PC-9 (cell line): ENCODE measurements at regions of chr2 and their contacts with region 1.

Region 1: GRCh38 chr2:121519732-121520640 is 10.7 kb upstream of the RNU4ATAC start:
- DNase-seq: no peak
- H3K4me3 ChIP-seq: no peak overlapping the region
- H3K27ac ChIP-seq: no peak overlapping the region
- H3K4me1 ChIP-seq: no peaks in the 10 kb centered on the region
- H3K27me3 ChIP-seq: no peaks in the 10 kb centered on the region
- CTCF ChIP-seq: no peak

Region 2: GRCh38 chr2:120415060-120415459 is 1104.9 kb before region 1 on chr2:
- CTCF ChIA-PET with region 1: interaction called, 12 read pairs
- POLR2A ChIA-PET with region 1: no interaction called
- intact Hi-C with region 1: no loop called
- DNase-seq: no peak
- H3K4me3 ChIP-seq: no peak overlapping the region
- H3K27ac ChIP-seq: no peak overlapping the region
- H3K4me1 ChIP-seq: no peaks in the 10 kb centered on the region
- H3K27me3 ChIP-seq: no peaks in the 10 kb centered on the region
- CTCF ChIP-seq: no peak

Region 3: DNA sequence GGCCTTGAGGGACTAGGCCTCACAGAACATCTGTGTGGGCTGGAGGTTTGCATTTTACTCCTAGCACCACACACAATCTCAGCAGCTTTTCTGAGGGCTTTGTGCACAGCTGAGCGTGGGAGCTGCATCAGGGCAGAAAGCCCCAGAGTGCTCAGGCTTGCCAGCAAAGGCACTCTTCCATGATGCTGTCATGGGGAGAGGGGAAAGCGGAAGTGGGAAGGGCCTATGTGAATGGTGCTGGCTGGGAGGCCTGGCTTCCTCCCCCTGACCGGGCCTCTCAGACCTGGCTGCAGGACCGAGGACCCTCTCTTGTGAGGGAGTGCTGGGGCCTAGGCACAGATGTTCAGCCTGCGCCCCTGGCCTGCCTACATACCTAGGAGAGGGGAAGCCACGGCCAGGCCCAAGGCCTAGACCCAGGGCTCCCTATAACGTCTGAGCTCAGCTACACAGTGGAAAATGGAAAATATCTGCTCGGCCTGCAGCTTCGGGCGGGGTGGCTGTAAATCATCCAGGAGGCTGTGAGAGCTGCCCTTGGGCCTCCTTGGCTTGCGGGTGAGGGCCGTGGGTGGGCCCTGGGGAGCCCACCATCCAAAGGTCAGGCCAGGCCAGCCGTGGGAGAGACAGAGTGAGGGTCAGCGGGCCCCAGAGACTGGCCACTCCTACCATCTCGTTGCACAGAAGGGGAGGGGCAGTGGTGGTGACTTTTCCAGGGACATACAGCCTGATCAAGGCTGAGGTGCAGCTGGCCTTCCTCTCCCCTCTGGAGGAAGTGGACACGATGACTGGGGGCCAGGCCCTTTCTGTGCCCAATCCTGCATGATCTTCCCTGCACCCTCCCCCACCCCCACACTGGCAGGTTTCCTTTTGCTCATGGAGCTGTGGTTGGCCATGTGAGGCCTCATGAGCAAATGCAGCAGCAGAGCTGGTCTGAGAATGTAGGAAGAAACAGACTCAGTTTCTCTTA is 761.5 kb before region 1 on chr2:
- CTCF ChIA-PET with region 1: no interaction called
- POLR2A ChIA-PET with region 1: no interaction called
- intact Hi-C with region 1: no loop called
- DNase-seq: no peak
- H3K4me3 ChIP-seq: no peak overlapping the region
- H3K27ac ChIP-seq: no peak overlapping the region
- H3K4me1 ChIP-seq: no peaks in the 10 kb centered on the region
- H3K27me3 ChIP-seq: peaks cover 13% of the 10 kb centered on the region; the same call in 1 of the 2 replicates
- CTCF ChIP-seq: no peak

Region 4: DNA sequence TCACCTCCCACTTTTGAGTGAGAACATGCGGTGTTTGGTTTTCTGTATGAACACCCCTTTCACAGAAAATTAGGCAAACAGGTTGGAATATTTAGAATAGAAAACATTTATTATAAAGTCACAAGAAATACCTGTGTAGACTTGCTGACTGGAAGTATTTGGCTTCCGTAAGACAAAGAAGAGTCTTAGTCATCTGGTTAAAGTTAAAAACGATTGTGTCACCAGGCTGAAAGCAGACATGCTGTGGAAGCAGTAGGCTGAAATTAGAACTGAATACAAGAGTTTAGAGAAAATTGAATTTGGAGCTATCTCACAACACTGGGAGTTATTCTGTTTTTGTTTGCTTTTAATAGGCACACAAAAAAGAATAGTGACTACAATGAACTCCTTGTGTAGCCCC is 145.5 kb after region 1 on chr2:
- CTCF ChIA-PET with region 1: no interaction called
- POLR2A ChIA-PET with region 1: no interaction called
- intact Hi-C with region 1: no loop called
- DNase-seq: no peak
- H3K4me3 ChIP-seq: no peak overlapping the region
- H3K27ac ChIP-seq: no peak overlapping the region
- H3K4me1 ChIP-seq: no peaks in the 10 kb centered on the region
- H3K27me3 ChIP-seq: no peaks in the 10 kb centered on the region
- CTCF ChIP-seq: no peak